Prostate gland (tissue), 2 donors: ENCODE measurements at regions of chr9 and their contacts with region 1.

Region 1: GRCh38 chr9:4855841-4856240 is 63.1 kb downstream of the RCL1 start:
- DNase-seq: no peak
- H3K4me3 ChIP-seq: no peak overlapping the region
- H3K27ac ChIP-seq: no peak overlapping the region
- H3K4me1 ChIP-seq: no peaks in the 10 kb centered on the region
- H3K27me3 ChIP-seq: no peaks in the 10 kb centered on the region
- CTCF ChIP-seq: no peak
- POLR2A ChIP-seq: no peak

Region 2: GRCh38 chr9:4417578-4418325 is 438.1 kb before region 1 on chr9:
- intact Hi-C with region 1: no loop called
- DNase-seq: no peak
- H3K4me3 ChIP-seq: no peak overlapping the region
- H3K27ac ChIP-seq: no peak overlapping the region
- H3K4me1 ChIP-seq: no peaks in the 10 kb centered on the region
- H3K27me3 ChIP-seq: no peaks in the 10 kb centered on the region
- CTCF ChIP-seq: no peak
- POLR2A ChIP-seq: no peak

Region 3: DNA sequence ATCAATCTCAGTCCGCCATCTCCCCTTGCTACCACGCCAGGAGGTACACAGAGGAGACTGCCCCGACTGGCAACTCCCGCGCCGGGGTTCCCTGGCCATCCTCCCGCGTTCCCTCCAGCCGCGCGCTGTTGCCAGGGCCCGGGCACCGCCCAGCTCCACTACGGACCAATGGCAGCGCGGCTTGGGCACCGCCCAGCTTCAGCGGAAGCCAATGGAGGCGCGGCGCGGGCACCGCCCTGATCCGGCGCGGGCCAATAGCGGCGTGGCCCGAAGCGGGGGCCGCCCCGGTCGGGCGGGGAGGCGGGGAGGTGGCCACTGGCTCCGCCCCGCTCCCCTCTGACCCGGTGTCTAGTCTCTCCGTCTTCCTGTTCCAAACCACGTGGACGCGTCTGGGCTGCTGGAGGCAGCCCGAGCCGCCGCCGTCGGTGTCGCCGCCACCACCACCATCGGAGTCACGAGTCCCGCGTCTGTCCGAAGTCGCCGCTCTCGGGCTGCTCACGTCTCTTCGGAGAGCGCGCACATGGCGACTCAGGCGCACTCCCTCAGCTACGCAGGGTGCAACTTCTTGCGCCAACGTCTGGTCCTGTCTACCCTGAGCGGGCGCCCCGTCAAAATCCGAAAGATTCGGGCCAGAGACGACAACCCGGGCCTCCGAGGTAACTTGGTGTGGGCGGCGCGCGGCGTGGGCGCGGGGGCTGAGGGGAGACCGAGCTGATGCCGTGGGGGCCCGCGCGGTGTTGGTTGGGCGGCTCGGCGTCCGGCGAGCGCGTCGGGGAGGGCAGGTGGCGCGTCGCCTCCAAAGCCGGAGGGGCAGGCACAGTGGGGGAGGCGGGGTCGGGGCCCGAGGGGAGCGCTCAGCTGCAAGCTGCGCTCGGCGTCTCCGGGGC is 63.0 kb before region 1 on chr9 and contains the start of gene RCL1:
- intact Hi-C with region 1: loop called (anchors 10 kb)
- DNase-seq: peak; percentile 95
- H3K4me3 ChIP-seq: peak within 1 kb of the TSS; percentile 67 to 91
- H3K27ac ChIP-seq: peak within 1 kb of the TSS; percentile 42 to 72
- H3K4me1 ChIP-seq: no peaks in the 10 kb centered on the region
- H3K27me3 ChIP-seq: no peaks in the 10 kb centered on the region
- CTCF ChIP-seq: no peak
- POLR2A ChIP-seq: peak; percentile 72
- total RNA-seq, gene RCL1: 18.9 to 29.3 TPM